Activated B cell treated with CpG ODN at 0.5 μM for 24 hours (primary cell): ENCODE measurements at regions of chr6 and their contacts with region 1.

Region 1: DNA sequence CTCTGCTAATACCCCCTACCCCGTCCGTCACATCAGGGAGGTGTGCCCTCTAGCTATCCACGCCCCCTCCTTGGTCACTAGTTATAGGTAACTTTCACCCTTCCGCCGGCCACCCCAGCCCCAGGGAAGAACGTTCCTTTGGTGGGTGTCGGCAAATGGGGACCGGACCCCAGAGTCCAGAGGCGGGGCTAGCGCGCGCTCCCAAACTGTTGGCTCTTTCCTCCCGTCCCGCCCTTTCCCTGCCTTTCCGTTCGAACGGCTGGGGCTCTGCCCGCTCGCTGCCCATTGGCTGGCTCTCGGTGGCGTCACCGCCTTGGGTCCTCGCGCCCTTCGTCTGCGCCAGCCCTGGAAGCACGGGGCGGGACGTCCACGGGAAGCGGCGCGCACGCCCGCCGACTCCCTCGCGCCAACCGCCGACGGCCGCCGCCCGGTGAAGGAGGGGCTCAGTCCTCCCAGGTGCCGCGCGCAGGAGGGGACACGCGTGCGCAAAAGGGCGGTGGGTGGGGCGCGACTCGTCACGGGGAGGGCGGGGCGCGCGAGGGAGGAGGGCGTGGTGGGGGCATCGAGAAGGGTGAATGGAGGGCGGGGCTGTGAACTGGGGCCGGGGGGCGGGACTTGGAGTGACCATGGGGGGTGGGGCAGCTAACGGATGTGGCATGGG is 634 bp upstream of the PHF1 start:
- DNase-seq: peak; percentile 93
- ATAC-seq: peak; percentile 74
- H3K4me3 Mint-ChIP-seq: peak overlapping the region; percentile 88
- H3K27ac Mint-ChIP-seq: peak overlapping the region; percentile 87
- H3K4me1 Mint-ChIP-seq: peaks cover 47% of the 10 kb centered on the region
- H3K27me3 Mint-ChIP-seq: no peaks in the 10 kb centered on the region
- CTCF ChIP-seq: no peak

Region 2: DNA sequence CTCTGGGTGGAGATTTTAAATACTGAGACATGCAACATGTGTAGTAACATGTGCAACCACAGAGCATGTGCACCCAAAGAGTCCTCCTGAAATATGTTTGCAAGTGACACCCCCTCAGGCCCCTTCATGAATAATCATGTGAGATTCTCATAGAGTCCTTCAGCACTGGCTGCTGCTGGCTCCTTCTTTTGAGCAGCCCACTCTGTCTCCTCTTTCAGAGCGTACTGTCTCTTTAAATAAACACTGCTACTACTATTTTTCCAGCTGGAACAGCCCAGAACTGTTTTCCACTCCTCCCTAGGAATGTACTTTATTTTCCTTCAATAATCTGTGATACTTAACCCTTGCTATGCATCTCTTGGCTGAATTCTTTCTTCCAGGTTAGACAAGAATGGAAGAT is 922.1 kb before region 1 on chr6:
- CTCF ChIA-PET with region 1: no interaction called
- POLR2A ChIA-PET with region 1: no interaction called
- intact Hi-C with region 1: no loop called
- DNase-seq: no peak
- ATAC-seq: no peak
- H3K4me3 Mint-ChIP-seq: no peak overlapping the region
- H3K27ac Mint-ChIP-seq: no peak overlapping the region
- H3K4me1 Mint-ChIP-seq: peaks cover 16% of the 10 kb centered on the region
- H3K27me3 Mint-ChIP-seq: no peaks in the 10 kb centered on the region
- CTCF ChIP-seq: no peak

Region 3: DNA sequence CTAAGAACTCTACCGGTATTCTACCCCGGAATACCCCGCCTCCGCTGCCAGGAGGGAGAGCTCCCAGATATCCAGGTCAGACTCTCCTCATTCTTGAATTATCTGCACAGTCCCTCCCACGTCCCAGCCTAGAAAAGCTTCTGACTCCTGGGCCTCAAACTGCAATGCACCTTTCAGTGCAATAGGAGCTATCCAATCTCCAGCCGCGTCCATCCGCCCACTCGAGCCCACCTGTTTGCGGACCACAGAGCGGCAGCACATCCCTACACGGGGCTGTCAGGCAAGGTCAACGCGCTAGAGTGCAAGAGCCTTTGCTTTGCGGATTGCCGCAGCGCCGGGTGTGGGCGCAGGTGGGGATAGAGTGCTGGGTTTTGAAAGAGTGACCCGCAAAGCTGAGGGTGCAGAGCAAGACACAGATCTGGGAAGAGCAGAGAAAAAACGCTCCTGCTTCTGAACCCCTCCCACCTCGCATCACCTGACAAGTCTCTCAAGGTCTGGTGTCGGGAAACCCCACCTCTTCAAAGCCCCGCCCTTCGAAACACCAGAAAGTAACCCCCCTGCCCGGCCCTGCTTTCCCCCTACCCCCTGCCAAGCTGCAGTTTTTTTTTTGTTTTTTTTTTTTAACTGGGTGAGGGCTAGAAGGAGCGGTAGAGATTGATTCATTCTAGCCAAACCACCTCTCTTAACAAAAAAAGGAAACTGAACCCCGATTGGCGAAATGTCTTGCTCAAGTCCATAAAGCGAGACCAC is 97.6 kb before region 1 on chr6:
- CTCF ChIA-PET with region 1: no interaction called
- POLR2A ChIA-PET with region 1: interaction called, 21 read pairs
- intact Hi-C with region 1: loop called (anchors 1 kb)
- DNase-seq: peak; percentile 63
- ATAC-seq: peak; percentile 25
- H3K4me3 Mint-ChIP-seq: peak overlapping the region; percentile 99
- H3K27ac Mint-ChIP-seq: peak overlapping the region; percentile 97
- H3K4me1 Mint-ChIP-seq: peaks cover 64% of the 10 kb centered on the region
- H3K27me3 Mint-ChIP-seq: no peaks in the 10 kb centered on the region
- CTCF ChIP-seq: no peak

Region 4: DNA sequence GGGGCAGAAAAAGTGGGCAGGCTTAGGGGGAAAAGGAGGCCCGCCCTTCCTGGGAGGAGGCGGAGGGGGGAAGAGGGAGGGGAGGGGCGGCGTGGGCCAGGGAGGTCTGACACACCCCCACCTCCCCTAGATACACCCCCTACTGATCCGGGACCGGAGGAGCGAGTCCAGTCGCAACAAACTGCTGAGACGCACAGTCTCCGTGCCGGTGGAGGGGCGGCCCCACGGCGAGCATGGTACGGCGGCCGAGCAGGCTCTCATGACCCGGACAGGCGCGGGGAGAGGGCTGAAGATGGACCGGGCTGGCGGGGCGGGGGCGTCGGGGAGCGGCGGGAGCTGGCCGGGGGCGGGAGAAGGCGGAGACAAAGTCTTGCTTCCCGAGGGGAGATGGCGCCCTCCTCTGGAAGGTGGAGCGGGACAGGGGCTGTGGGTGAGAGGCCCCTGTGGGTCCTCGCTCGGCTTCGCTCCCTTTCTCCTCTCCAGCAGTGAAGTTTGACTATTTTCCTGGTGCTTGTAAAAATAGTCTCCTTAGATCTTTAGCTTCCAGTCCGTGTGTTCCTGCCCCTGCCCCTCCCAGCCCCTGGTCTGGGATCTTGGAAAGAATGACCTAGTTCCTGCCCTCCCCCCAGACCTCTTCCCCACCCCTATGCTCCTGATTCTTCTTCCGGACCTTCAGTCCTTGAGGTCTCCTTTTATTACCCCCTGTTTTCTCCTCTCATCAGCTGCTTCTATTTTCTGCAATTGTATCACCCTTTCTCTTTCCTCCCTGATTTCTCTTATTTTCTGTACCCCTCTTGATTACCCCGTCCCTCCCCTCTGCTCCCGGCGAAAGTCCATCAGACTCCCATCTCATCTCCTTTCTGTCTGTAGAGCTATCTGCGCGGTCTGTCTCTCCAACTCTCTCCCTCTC is 15.7 kb after region 1 on chr6:
- CTCF ChIA-PET with region 1: interaction called, 3 read pairs
- POLR2A ChIA-PET with region 1: interaction called, 28 read pairs
- intact Hi-C with region 1: loop called (anchors 1 kb)
- DNase-seq: peak; percentile 68
- ATAC-seq: peak; percentile 60
- H3K4me3 Mint-ChIP-seq: peak overlapping the region; percentile 87
- H3K27ac Mint-ChIP-seq: peak overlapping the region; percentile 89
- H3K4me1 Mint-ChIP-seq: peaks cover 66% of the 10 kb centered on the region
- H3K27me3 Mint-ChIP-seq: no peaks in the 10 kb centered on the region
- CTCF ChIP-seq: no peak

Region 5: DNA sequence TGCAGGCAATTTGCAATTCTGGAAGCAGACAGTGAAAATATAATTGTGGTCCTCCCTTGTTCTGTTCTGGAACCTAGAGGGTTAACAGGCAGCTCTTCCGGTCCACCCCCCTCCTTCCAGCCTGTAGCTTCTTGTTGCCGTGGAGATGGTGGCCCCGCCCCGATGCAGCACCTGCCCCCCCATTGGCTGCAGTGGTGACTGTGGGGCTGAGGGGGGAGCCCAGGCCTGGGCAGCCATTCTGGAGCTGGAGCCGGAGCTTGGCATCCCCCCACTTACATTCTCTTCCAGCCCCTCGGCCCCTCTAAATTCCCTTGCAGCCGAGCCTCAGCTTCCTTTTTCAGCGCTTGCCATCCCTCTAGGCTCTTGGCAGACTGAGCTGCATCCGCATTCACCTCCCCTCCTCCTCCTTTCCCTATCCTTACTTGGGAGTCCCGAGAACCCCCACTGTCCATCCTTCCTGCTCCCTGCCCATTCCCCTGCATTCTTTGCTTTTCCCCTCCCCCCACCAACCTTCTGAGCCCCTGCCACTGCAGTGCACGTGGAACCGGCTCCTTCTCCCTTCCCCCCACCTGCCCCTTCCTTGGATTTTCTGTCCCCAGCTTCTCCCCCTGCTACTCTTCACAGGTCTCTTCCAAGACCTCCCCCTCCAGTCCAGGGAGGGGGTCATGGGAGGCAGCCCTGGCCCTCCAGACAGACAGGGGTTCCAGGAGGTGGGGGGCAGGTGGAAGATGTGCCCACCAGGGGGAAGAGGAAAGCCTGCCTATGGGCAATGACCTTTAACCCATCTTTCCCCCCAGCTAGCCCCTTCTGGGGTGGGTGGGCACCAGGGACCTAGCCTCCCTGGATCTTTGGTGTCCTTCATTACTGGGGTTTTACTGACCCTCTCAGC is 21.1 kb after region 1 on chr6:
- CTCF ChIA-PET with region 1: interaction called, 3 read pairs
- POLR2A ChIA-PET with region 1: interaction called, 28 read pairs
- intact Hi-C with region 1: no loop called
- DNase-seq: peak; percentile 69
- ATAC-seq: peak; percentile 56
- H3K4me3 Mint-ChIP-seq: peak overlapping the region; percentile 67
- H3K27ac Mint-ChIP-seq: peak overlapping the region; percentile 60
- H3K4me1 Mint-ChIP-seq: peaks cover 78% of the 10 kb centered on the region
- H3K27me3 Mint-ChIP-seq: no peaks in the 10 kb centered on the region
- CTCF ChIP-seq: no peak

Region 6: GRCh38 chr6:33454009-33454946 is 44.1 kb after region 1 on chr6 and contains the start of gene ZBTB9:
- CTCF ChIA-PET with region 1: no interaction called
- POLR2A ChIA-PET with region 1: interaction called, 12 read pairs
- intact Hi-C with region 1: loop called (anchors 1 kb)
- DNase-seq: peak; percentile 87
- ATAC-seq: peak; percentile 100
- H3K4me3 Mint-ChIP-seq: peak within 1 kb of the TSS; percentile 97
- H3K27ac Mint-ChIP-seq: peak within 1 kb of the TSS; percentile 88
- H3K4me1 Mint-ChIP-seq: peaks cover 26% of the 10 kb centered on the region
- H3K27me3 Mint-ChIP-seq: no peaks in the 10 kb centered on the region
- CTCF ChIP-seq: no peak
- total RNA-seq, gene ZBTB9: 10.7 and 12.5 TPM in 2 replicates